ENCODE measurements at regions of chr3 and their contacts with region 1.

Region 1: GRCh38 chr3:50227390-50228183 is 8.4 kb upstream of the GNAI2 start:
- DNase-seq: peak; percentile 95 to 97
- ATAC-seq: peak; percentile 94
- H3K4me3 ChIP-seq: peak overlapping the region; percentile 19 to 56
- H3K27ac ChIP-seq: peak overlapping the region in 1 of 2 donors; percentile 28
- H3K4me1 ChIP-seq: no peaks in the 10 kb centered on the region
- H3K27me3 ChIP-seq: no peaks in the 10 kb centered on the region

Region 2: DNA sequence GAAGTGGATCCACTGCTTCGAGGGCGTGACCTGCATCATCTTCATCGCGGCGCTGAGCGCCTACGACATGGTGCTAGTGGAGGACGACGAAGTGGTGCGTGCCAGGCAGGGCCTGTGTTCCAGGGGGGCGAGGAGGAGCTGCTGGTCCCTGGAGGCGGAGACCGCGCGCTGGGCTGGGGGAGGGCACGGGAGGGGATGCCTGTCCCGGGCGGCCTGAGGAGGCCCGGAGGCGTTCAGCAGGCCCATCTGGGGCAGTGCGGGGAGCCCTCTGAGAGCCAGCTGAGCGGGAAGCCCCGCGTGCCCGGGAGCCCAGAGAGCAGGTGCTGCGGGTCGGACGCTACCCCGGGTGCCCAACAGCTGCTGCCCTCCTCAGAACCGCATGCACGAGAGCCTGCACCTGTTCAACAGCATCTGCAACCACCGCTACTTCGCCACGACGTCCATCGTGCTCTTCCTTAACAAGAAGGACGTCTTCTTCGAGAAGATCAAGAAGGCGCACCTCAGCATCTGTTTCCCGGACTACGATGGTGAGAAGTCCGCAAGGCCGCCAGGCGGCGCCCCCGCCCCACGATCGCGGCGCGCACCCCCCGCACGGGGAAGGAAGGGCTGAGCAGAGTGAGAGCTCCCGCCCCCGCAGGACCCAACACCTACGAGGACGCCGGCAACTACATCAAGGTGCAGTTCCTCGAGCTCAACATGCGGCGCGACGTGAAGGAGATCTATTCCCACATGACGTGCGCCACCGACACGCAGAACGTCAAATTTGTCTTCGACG is 33.3 kb before region 1 on chr3:
- intact Hi-C with region 1: loop called (anchors 1 to 2 kb)
- DNase-seq: peak; percentile 67 to 92
- ATAC-seq: peak; percentile 71
- H3K4me3 ChIP-seq: no peak overlapping the region
- H3K27ac ChIP-seq: no peak overlapping the region
- H3K4me1 ChIP-seq: no peaks in the 10 kb centered on the region
- H3K27me3 ChIP-seq: no peaks in the 10 kb centered on the region

Region 3: GRCh38 chr3:50245831-50246516 is 18.4 kb after region 1 on chr3:
- intact Hi-C with region 1: loop called in 1 of 2 experiments (anchors 2 kb)
- DNase-seq: peak; percentile 95 to 98
- ATAC-seq: peak; percentile 90
- H3K4me3 ChIP-seq: no peak overlapping the region
- H3K27ac ChIP-seq: peak overlapping the region in 1 of 2 donors; percentile 30
- H3K4me1 ChIP-seq: peaks cover 0 to 2% of the 10 kb centered on the region in 2 donors
- H3K27me3 ChIP-seq: no peaks in the 10 kb centered on the region

Region 4: GRCh38 chr3:50321336-50322114 is 93.9 kb after region 1 on chr3:
- intact Hi-C with region 1: no loop called
- DNase-seq: peak; percentile 94 to 95
- ATAC-seq: peak; percentile 90
- H3K4me3 ChIP-seq: peak overlapping the region; percentile 67 to 83
- H3K27ac ChIP-seq: peak overlapping the region; percentile 48 to 85
- H3K4me1 ChIP-seq: no peaks in the 10 kb centered on the region
- H3K27me3 ChIP-seq: no peaks in the 10 kb centered on the region